ENCODE measurements at regions of chr16 and their contacts with region 1.

Region 1: GRCh38 chr16:4402439-4403132 is 13.8 kb downstream of the CORO7 start:
- DNase-seq: peak; percentile 90
- CTCF ChIP-seq: peak; percentile 97

Region 2: DNA sequence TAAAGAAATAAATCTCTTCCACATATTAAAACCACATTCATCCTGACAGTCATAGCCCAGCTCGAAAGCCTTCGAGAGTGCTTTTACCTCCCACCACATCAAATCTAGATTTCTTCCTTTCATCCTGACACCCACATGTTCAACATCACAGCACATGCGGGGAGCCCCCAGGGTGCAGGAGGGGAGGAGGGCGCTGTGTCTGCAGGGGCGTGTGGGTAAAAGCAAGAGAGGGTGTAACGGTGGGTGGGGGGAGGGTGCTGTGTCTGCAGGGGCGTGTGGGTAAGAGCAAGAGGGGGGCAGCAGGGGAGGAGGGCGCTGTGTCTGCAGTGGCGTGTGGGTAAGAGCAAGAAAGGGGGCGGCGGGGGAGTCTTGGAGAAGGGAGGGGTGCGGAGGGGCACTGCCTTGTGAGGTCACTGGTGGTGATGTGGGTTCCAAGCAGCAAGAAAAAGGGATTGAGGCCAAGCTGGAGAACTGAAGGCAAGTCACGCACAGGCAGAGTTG is 321.0 kb before region 1 on chr16:
- CTCF ChIA-PET with region 1: no interaction called
- POLR2A ChIA-PET with region 1: no interaction called
- DNase-seq: no peak
- CTCF ChIP-seq: no peak

Region 3: DNA sequence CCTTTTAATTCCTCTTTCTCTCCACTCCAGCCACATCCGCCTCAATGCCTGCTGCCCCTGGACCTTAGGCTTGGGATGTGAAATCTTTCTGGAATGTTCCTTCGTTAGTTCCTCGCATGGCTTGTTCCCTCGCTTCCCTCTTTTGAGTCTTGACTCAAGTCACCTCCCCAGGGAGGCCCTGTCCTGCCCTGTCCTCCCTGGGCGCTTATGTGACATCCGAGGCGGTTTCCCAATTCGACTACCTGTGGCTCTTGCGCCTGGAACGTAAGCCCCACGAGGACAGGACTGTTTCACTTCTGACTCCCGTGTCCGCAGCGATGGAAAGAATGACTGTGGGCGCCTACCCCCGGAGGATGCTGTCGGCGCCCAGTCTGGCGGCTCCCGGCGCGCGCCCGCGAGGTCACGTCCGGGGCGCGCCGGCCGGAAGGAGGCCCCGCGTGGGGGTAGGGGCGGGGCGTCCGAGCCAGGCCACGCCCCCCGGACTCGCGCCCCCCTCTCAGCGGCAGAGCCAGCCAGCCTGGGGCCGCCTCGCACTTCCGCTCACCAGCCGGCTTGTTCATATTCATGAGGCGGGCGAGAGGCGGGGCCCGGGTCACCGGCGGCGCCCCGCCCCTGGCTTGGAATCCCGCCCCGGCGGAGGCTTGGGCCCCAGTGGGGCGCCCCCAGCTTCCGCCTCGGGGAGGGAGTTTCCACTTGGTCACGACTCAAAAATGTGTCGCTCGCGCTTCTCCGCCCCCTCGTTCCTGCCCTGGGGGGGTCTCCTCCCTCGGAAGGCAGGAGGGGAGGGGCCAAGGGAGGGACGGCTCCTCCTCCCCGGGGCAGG is 95.2 kb before region 1 on chr16:
- CTCF ChIA-PET with region 1: interaction called, 30 read pairs
- POLR2A ChIA-PET with region 1: no interaction called
- DNase-seq: peak; percentile 99
- CTCF ChIP-seq: peak; percentile 1

Region 4: DNA sequence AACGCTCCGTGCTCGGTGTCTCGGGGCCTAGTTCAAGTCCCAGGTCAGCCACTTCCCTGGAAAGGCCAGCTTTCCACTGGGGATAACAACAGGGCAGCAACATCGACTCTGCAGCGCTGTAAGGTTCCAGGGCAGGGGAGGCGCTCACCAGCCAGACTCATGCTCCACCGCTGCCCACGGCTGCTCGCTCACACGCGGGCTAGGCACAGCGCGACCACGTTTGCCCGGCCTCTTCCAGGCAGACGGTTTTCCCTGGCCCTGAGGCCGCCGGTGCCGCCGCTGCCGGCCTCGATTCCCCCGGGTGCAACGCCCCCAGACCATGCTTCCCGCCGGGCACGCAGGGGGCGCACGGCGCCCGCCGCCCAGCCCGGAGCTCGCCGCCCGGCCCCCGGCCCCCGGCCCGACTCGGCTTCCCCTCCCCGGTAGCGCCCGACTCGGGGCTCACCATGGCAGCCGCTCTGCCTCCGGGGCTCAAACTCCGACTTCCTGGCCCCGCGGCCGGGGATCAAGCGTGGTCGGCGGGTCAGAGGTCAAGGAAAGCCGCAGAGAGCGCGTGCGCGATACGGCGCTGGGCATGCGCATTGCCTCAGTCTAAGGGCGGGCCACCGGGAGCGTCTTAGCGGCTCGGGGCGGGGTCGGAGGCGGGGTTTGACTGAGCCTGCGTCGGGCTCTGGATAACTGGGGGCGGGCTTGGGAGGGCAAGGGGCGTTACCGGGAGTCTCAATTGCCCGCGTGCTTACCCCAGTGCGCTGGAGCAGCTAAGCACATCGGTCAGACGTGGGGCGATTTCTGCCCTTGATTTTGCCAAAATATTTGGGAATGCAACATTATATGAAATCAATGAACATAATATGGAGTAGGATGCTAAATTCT is 51.6 kb before region 1 on chr16 and contains the start of gene PAM16:
- CTCF ChIA-PET with region 1: interaction called, 14 read pairs
- POLR2A ChIA-PET with region 1: no interaction called
- DNase-seq: peak; percentile 98
- CTCF ChIP-seq: no peak

Region 5: DNA sequence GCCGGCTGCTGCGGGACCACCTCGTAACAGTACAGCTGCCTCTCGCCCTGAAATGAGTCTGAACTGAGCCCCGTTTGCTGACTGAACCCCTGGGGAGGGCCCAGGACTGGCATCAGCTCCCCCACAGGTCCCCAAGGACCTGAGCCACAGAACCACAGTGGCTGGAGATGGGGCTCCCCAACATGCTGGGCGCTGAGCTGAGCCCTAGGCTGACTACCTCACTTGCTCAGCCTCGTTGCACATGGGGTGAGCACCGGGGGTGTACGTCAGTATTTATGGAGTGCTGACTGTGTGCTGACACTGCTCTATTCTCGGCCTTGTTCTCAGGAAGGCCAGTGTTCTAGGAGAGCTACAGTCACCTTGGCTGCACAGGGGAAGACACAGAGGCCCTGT is 37.6 kb before region 1 on chr16:
- CTCF ChIA-PET with region 1: interaction called, 64 read pairs
- POLR2A ChIA-PET with region 1: no interaction called
- DNase-seq: peak; percentile 48
- CTCF ChIP-seq: no peak

Region 6: GRCh38 chr16:4416200-4417032 is 13.8 kb after region 1 on chr16 and contains the start of gene CORO7:
- CTCF ChIA-PET with region 1: interaction called, 89 read pairs
- POLR2A ChIA-PET with region 1: interaction called, 3 read pairs
- DNase-seq: peak; percentile 97
- CTCF ChIP-seq: no peak

Region 7: DNA sequence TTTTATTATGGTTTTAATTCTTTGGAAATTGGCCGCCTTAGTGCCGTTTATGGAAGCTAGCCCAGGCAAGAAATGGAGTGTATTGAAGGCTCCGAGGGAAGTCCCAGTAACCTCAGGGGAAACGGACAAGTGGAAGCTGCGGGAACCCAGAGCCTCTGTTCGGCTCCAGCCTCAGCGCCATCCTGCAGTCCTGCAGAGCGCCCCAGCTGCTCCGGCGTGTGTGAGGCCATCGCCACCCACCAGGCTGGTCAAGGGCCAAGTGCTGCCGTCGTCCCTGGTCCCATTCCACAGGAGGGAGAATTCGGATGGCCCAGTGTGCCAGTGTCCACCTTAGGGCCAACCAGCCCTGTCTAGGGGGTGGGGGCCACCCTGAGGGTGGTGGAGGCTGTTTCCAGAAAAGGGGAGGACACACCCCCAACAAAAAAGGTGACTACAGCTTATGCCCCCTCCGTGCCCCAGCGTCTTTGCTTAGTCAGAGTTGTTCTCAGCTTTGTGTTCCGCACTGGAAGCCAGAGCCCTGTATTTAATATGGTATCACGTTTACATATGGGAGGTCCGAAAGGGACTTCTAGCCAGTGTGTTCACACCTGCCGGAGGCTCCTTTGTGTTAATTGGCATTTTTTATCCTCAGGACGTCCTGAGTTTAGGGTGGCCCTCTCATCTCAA is 235.0 kb after region 1 on chr16:
- CTCF ChIA-PET with region 1: no interaction called
- POLR2A ChIA-PET with region 1: no interaction called
- DNase-seq: no peak
- CTCF ChIP-seq: no peak